H1 (cell line): ENCODE measurements at regions of chr2 and their contacts with region 1.

Region 1: DNA sequence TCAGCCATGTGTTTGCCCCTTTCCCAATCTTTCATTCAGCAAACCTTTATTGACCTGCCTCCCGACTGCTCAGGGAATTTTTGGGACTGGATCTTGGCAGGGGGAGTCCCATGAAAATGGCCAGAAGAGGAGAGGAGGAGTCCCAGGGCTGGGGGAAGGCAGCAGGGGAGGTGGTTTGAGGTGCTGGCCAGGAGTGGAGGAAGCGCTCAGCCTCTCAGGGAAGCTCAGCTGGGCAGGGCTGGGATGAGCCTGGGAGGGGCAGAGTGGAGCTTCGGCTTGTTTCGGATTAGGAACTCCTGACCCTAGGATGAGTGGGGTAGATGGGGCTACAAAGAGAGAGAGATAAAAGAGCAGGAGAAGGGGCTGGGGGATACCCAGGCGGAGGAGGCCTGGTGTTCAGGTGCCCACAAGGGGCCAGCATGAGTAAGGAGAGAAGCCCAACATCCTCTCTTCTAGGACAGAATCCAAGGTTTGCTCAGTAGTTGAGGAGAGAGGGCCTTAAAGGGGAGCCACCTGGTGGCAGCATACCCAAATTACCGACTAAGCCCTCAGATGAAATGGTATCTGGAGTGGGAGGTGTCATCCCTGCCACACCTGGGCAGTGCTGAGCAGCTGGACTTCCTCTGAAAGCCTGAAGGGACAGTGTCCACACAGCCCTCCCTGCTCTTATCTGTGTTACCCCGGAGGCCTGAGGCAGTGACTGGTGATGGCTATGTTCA is 91.1 kb downstream of the INHBB start:
- DNase-seq: peak; percentile 53 to 88
- H3K4me3 ChIP-seq: no peak overlapping the region
- H3K27ac ChIP-seq: no peak overlapping the region
- H3K4me1 ChIP-seq: peaks cover 0 to 30% (median 16%) of the 10 kb centered on the region in 4 experiments; a peak in 6 of 7 replicates
- H3K27me3 ChIP-seq: peaks cover 4 to 64% (median 51%) of the 10 kb centered on the region in 4 experiments
- CTCF ChIP-seq: peak in 2 of 3 experiments; percentile 94 to 95; a peak in 3 of 4 replicates
- EP300 ChIP-seq: no peak
- POLR2A ChIP-seq: no peak
- RAD21 ChIP-seq: peak; percentile 80 to 82

Region 2: GRCh38 chr2:120323214-120323613 is 113.8 kb before region 1 on chr2:
- CTCF ChIA-PET with region 1: interaction called, 11 read pairs
- POLR2A ChIA-PET with region 1: no interaction called
- DNase-seq: no peak
- H3K4me3 ChIP-seq: no peak overlapping the region
- H3K27ac ChIP-seq: no peak overlapping the region
- H3K4me1 ChIP-seq: no peaks in the 10 kb centered on the region; a peak in 1 of 7 replicates
- H3K27me3 ChIP-seq: peaks cover 0 to 2% (median 0%) of the 10 kb centered on the region in 4 experiments; a peak in 3 of 7 replicates
- CTCF ChIP-seq: no peak
- EP300 ChIP-seq: no peak
- POLR2A ChIP-seq: no peak
- RAD21 ChIP-seq: no peak

Region 3: DNA sequence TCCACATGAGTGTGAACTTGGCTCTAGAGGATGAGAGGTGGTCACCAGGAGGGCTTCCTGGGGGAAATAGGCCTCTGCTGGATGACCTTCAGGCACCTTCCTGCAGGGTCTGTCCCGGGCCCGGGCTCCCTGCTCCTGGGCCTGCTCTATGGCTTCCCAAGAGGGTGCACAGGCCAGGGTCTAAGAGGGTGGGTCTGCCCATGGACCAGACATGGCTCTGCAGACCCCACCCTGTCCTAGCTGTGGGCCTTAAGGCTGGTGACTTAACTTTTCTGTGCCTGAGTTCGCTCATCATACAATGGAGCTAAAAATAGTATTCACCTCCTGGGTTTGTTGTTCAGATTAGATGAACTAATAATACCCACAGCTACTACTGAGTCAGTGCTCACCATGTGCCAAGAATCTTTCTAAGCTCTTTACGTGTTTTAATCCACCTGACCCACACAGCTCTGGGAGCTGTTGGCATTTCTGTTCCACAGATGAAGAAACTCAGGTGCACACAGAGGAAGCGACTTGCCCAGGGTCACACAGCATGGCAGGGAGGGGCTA is 76.7 kb before region 1 on chr2:
- CTCF ChIA-PET with region 1: interaction called, 26 read pairs
- POLR2A ChIA-PET with region 1: no interaction called
- DNase-seq: no peak
- H3K4me3 ChIP-seq: no peak overlapping the region
- H3K27ac ChIP-seq: no peak overlapping the region
- H3K4me1 ChIP-seq: peaks cover 0 to 2% (median 0%) of the 10 kb centered on the region in 4 experiments; a peak in 2 of 7 replicates
- H3K27me3 ChIP-seq: peaks cover 0 to 6% (median 2%) of the 10 kb centered on the region in 4 experiments; a peak in 3 of 7 replicates
- CTCF ChIP-seq: no peak
- EP300 ChIP-seq: no peak
- POLR2A ChIP-seq: no peak
- RAD21 ChIP-seq: no peak

Region 4: GRCh38 chr2:120384486-120385354 is 52.3 kb before region 1 on chr2:
- CTCF ChIA-PET with region 1: interaction called, 16 read pairs
- POLR2A ChIA-PET with region 1: no interaction called
- DNase-seq: no peak
- H3K4me3 ChIP-seq: no peak overlapping the region
- H3K27ac ChIP-seq: no peak overlapping the region
- H3K4me1 ChIP-seq: peaks cover 3 to 27% (median 9%) of the 10 kb centered on the region in 4 experiments
- H3K27me3 ChIP-seq: peaks cover 0 to 3% (median 0%) of the 10 kb centered on the region in 4 experiments; a peak in 4 of 7 replicates
- CTCF ChIP-seq: no peak
- EP300 ChIP-seq: no peak
- POLR2A ChIP-seq: no peak
- RAD21 ChIP-seq: no peak

Region 5: DNA sequence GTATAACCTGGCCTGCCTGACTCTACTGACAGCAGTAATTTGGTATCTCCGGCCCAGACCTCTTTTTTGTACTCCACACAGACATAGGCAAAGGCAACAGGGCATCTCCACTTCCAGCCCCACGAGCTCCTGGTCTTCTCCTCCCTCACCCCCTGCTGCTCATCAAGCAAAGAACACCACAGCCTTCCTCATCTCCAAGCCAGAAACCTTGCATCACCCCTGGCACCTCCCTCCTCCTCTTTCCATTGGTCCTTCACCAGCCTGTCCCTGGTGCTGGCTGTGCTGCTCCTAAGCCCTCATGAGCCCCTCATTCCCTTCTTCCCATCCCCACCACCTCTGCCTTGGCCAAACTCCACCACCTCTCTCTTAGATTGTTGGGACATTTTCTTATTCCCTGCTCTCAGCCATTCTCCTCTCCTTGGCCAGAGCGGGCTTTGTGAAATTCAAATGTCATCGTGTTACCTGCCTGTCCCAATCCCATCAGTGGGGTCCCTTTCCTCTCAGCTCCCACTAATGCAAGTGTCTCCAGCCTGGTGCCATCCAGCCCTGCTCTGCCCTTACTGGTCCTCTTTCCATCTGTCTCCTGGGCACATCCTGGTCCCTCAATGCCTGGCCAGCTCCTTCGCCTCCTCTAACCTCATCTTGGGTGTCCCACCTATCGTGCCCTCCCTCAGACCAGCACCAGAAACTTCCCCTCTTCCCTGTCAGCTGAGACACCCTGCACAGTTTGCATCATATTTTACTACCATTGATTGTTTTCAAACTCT is 13.7 kb before region 1 on chr2:
- CTCF ChIA-PET with region 1: interaction called, 14 read pairs
- POLR2A ChIA-PET with region 1: no interaction called
- DNase-seq: peak in 1 of 2 experiments; percentile 36
- H3K4me3 ChIP-seq: no peak overlapping the region
- H3K27ac ChIP-seq: no peak overlapping the region
- H3K4me1 ChIP-seq: peaks cover 0 to 3% (median 0%) of the 10 kb centered on the region in 4 experiments; a peak in 1 of 7 replicates
- H3K27me3 ChIP-seq: peaks cover 0 to 14% (median 8%) of the 10 kb centered on the region in 4 experiments; a peak in 4 of 7 replicates
- CTCF ChIP-seq: no peak
- EP300 ChIP-seq: no peak
- POLR2A ChIP-seq: no peak
- RAD21 ChIP-seq: no peak

Region 6: GRCh38 chr2:120465989-120466703 is 29.1 kb after region 1 on chr2:
- CTCF ChIA-PET with region 1: interaction called, 16 read pairs
- POLR2A ChIA-PET with region 1: no interaction called
- DNase-seq: peak; percentile 84 to 89
- H3K4me3 ChIP-seq: peak overlapping the region in 2 of 4 experiments; percentile 14 to 30; a peak in 3 of 8 replicates
- H3K27ac ChIP-seq: no peak overlapping the region
- H3K4me1 ChIP-seq: peaks cover 5 to 13% (median 8%) of the 10 kb centered on the region in 4 experiments
- H3K27me3 ChIP-seq: peaks cover 90 to 98% (median 95%) of the 10 kb centered on the region in 4 experiments
- CTCF ChIP-seq: no peak
- EP300 ChIP-seq: peak in 1 of 2 experiments; percentile 60; a peak in 1 of 3 replicates
- POLR2A ChIP-seq: no peak
- RAD21 ChIP-seq: no peak

Region 7: DNA sequence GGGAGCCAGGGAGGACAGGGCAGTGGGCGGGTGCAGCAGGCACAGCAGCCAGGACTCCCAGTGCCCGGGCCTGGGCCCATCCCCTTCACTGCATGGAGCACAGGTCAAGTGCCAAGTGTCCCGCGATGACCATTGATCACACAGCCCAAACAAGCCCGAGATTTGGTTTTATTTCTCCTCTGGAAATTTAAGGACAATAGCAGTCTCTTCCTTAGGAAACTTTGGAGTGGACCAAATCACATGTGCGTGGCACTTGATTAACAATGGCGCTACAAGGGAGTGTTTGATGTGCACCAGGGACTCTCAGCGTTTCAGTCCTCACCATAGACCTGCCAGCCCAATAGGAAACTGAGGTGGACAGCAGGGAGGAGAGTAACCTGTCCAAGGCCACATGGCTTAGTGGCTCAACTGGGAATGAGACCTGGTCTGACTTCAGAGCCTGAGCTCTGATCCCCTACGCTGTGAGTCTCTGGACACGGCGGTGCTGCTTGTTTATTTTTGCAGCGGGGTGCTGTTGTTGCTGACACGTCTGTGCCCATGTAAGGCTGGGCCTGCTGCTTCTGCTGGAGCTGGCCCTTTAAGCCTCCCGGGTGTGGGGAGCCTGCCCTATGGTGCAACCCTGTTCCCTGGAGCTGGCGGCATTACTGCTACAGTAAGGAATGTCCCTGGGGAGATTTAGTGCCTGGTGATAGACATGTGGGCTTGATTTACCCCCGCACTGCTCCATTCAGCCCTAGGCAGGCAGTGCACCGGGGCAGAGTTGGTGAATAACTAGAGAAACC is 103.1 kb after region 1 on chr2:
- CTCF ChIA-PET with region 1: no interaction called
- POLR2A ChIA-PET with region 1: no interaction called
- DNase-seq: no peak
- H3K4me3 ChIP-seq: no peak overlapping the region
- H3K27ac ChIP-seq: no peak overlapping the region
- H3K4me1 ChIP-seq: peaks cover 0 to 5% (median under 1%) of the 10 kb centered on the region in 4 experiments; a peak in 2 of 7 replicates
- H3K27me3 ChIP-seq: peaks cover 0 to 3% (median 0%) of the 10 kb centered on the region in 4 experiments; a peak in 3 of 7 replicates
- CTCF ChIP-seq: no peak
- EP300 ChIP-seq: no peak
- POLR2A ChIP-seq: no peak
- RAD21 ChIP-seq: no peak